A549 (cell line): ENCODE measurements at regions of chr17 and their contacts with region 1.

Region 1: DNA sequence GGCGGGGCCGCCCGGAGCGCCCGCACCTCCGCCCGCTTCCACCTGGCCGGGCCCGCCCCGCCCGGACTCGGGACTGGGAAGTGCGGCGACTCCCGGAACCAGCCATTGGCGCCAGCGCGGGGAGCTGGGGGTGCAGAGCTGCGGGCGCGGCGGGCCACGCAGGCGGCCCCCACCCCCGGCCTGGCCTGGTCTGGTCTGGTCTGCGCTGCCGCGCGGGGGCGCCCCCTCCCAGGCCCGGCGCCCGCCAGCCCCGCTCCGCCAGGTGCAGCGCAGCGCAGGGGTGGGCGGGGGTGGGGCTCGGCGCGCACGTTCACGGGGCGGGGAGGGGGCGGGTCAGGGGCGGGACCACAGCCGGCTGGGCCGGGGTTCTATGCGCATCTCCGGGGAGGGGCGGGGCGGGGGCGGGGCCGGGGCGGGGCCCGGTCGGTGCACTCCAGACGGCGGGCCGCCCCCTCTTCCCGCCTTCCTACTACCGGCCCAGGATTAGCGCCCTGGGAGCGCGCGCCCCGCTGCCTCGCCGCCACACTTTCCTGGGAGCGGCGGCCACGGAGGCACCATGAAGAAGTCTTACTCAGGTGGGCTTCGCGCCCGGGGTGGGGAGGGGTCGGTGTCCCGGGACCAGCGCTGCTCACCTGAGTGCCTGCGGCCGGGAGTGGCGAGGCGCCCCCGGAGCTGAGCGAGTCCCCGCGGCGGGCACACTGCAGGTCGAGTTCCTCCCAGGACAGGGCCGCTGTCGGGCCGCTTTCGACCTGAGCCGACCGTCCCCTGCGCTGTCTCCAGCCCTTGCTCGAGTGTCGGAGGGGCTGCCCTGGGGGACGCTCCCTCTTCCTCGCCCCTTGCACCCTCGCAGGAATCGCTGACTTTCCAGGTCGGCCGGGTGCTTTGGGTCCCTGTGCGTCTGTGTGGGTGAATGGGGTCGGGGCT is 140.5 kb downstream of the SEC14L1 start:
- DNase-seq: peak; percentile 86 to 93
- ATAC-seq: peak; percentile 58 to 60
- H3K4me3 ChIP-seq: peak overlapping the region; percentile 81
- H3K27ac ChIP-seq: peak overlapping the region; percentile 92 to 94
- H3K4me1 ChIP-seq: peaks cover 44% of the 10 kb centered on the region
- CTCF ChIP-seq: peak; percentile 93
- EP300 ChIP-seq: no peak
- POLR2A ChIP-seq: peak; percentile 70
- RAD21 ChIP-seq: peak; percentile 52 to 92; a peak in 4 of 5 replicates

Region 2: GRCh38 chr17:77061669-77062068 is 219.6 kb before region 1 on chr17:
- CTCF ChIA-PET with region 1: no interaction called
- POLR2A ChIA-PET with region 1: no interaction called
- DNase-seq: no peak
- ATAC-seq: no peak
- H3K4me3 ChIP-seq: no peak overlapping the region
- H3K27ac ChIP-seq: no peak overlapping the region
- H3K4me1 ChIP-seq: peaks cover 4% of the 10 kb centered on the region; the same call in 1 of the 3 replicates
- CTCF ChIP-seq: no peak
- EP300 ChIP-seq: no peak
- POLR2A ChIP-seq: no peak
- RAD21 ChIP-seq: no peak

Region 3: DNA sequence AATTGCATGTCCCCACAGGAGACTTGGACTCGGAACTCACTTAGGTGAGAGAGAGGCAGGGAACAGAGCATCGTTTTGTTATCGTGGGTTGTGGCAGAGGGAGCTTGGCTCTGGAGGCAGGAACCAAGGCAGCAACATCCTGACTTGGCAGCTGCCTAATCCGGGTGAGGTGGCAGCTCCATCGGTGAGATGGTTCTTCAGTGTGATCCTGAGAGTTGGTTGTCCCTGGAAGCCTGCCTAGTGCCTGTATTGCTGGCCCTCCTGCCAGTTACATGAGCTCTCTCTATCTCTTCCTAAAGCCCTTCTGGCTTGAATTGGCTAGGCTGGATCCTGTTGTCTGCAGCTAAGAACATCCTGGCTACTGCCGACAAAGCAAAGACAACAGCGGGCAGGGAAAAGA is 160.4 kb before region 1 on chr17:
- CTCF ChIA-PET with region 1: no interaction called
- POLR2A ChIA-PET with region 1: no interaction called
- DNase-seq: no peak
- ATAC-seq: no peak
- H3K4me3 ChIP-seq: no peak overlapping the region
- H3K27ac ChIP-seq: peak overlapping the region; percentile 70 to 81
- H3K4me1 ChIP-seq: peaks cover 50% of the 10 kb centered on the region
- CTCF ChIP-seq: no peak
- EP300 ChIP-seq: no peak
- POLR2A ChIP-seq: no peak
- RAD21 ChIP-seq: no peak

Region 4: DNA sequence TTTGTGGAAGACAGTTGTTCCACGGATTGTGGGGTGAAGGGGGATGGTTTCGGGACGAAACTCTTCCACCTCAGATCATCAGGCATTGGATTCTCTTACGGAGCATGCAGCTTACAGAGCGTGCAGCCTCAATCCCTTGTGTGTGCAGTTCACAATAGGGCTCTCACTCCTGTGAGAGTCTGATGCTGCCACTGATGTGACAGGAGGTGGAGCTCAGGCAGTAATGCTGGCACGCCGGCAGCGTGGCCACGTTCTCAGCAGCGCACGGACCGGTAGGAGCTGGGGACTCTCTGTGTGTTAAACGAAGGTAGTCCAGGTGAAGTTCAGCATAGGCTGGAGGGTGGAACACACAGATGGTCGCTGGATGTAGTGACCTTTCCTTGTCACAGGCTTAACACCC is 102.7 kb before region 1 on chr17:
- CTCF ChIA-PET with region 1: no interaction called
- POLR2A ChIA-PET with region 1: no interaction called
- DNase-seq: no peak
- ATAC-seq: no peak
- H3K4me3 ChIP-seq: no peak overlapping the region
- H3K27ac ChIP-seq: no peak overlapping the region
- H3K4me1 ChIP-seq: no peaks in the 10 kb centered on the region
- CTCF ChIP-seq: no peak
- EP300 ChIP-seq: no peak
- POLR2A ChIP-seq: no peak
- RAD21 ChIP-seq: no peak

Region 5: GRCh38 chr17:77227461-77228237 is 53.6 kb before region 1 on chr17:
- CTCF ChIA-PET with region 1: no interaction called
- POLR2A ChIA-PET with region 1: no interaction called
- DNase-seq: no peak
- ATAC-seq: peak; percentile 54 to 58
- H3K4me3 ChIP-seq: no peak overlapping the region
- H3K27ac ChIP-seq: peak overlapping the region in 1 of 2 experiments; percentile 19; a peak in 2 of 6 replicates
- H3K4me1 ChIP-seq: no peaks in the 10 kb centered on the region
- CTCF ChIP-seq: no peak
- EP300 ChIP-seq: no peak
- POLR2A ChIP-seq: no peak
- RAD21 ChIP-seq: no peak

Region 6: DNA sequence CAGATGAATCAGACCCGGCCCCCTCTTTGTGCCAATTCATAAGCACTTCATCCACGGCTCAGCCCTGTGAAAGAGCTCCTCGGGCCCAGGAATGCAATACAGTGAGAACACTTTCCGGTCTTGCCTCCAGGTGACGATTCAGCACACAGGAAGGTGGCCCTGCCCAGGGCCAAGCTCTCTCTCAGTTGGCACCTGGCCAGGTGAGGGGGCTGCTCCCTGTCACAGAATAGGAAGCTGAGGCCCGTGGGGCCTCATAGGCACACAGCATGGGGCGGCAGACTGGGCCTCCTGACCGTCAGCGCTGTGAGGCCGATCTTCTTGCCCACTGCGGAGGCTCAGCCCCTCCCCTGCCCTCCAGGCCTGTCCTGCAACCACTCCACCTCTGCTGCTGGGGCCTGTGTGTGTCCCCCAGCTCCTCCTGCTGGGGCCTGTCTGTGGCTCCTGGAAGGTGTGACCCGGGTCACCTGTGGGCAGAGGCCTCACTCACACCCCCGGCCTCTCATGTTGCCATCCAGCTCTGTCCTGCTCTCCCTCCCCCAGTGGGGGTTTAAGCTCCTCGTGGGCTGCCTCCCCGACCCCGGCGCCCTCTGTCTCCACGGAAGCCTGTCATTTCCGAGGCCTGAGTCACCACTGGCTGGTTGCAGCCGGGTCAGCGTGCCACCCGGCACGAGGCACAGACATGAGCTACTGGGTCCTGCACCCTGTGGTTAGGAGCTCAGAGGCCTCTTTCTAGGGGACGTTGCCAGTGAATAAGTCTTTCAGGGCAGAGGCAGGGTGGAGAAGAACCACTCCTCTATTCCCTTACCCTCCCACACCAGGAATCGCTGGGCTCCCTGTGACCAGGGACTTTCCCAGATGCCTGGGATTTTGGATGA is 26.1 kb before region 1 on chr17:
- CTCF ChIA-PET with region 1: interaction called, 16 read pairs
- POLR2A ChIA-PET with region 1: interaction called, 16 read pairs
- DNase-seq: peak; percentile 87 to 93
- ATAC-seq: peak; percentile 82 to 86
- H3K4me3 ChIP-seq: no peak overlapping the region
- H3K27ac ChIP-seq: peak overlapping the region; percentile 80 to 88
- H3K4me1 ChIP-seq: peaks cover 36% of the 10 kb centered on the region
- CTCF ChIP-seq: no peak; the same call in 2 of the 3 replicates
- EP300 ChIP-seq: peak in 1 of 2 experiments; percentile 52; a peak in 1 of 5 replicates
- POLR2A ChIP-seq: no peak
- RAD21 ChIP-seq: peak in 1 of 2 experiments; percentile 34; a peak in 4 of 5 replicates

Region 7: DNA sequence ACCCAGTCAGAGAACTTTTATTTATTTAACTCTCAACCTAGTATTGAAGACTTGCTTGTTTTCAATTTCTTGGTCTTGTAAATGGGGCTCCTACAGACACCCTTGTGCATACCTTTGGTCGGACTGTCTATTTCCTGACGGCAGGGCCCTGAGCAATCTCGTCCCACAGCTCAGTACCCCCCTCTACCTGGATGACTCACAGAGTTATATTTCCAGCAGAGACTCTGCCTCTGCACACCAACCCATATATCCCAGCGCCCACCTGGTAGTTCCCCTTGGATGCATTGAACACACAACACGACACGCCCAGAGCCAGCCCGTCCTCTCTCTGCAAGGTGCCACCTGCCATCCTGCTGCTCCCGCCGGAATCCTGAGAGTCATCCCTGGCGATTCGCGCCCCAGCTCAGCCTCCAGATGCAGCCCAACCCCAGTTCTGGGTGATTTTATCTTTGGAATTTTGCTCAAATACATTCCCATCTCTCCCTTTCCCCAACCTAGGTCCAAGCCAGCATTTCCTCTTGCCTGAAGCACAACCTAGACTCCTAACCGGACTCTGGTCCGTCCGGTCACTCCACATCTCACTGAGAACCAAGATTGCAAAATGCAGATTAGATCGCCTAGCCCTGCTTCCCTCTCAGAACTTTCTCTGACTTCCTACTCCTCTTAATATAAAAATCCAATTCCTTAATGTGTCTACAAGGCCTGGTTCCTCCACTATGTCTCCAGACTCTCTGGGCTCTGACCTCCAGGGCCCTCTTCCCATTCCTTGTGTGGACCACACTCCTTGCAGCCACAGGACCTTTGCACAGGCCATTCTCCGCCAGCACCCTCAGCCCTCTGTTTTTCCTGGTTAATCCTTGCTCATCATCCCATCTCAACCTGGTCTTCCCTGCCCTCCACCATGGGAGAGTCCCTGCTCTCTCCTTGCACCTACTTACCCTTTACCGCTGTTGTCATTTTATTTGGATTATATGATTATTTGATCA is 11.3 kb before region 1 on chr17:
- CTCF ChIA-PET with region 1: interaction called, 11 read pairs
- POLR2A ChIA-PET with region 1: no interaction called
- DNase-seq: no peak
- ATAC-seq: no peak; a peak in 1 of 6 replicates
- H3K4me3 ChIP-seq: no peak overlapping the region
- H3K27ac ChIP-seq: no peak overlapping the region
- H3K4me1 ChIP-seq: no peaks in the 10 kb centered on the region
- CTCF ChIP-seq: no peak
- EP300 ChIP-seq: no peak
- POLR2A ChIP-seq: no peak
- RAD21 ChIP-seq: no peak

Region 8: DNA sequence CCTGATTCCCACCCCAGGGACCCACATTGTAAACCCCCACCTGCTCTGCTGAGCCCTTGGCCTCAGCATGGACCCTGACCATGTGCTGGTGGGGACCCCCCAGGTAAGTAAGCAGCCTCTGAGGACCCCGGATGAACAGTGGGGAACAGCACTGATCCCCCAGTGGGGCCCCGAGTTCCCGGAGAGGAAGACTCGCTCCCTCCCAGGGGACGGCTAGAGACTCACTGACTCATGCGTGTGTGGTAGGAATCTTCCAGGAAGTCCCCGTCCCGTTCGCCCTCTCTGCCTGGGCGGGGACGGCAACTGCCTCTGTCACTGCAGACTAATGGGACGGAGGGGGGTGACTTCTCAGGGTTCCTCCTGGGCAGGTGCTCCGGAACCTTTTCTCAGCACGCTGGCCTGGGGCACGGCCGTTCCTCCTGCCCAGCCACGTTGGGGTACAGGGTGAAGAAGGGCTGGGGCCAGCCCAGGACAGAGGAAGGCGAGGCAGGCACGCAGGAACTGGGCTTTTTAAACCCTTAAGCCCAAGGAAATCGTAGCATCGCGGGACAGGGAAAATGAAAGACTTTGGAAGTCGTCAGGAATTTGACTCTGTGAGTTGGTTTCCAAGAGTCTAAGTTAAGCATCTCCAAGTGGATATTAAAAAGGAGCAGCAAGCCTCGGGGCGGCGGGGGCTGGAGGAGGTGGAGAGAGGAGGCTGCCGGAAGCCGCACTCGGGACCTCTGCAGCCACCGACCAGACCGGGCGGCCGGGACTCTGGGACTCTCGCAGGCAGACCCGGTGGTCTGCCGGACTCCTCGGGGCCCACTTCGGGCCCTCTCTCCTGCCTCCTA is 38.2 kb after region 1 on chr17:
- CTCF ChIA-PET with region 1: interaction called, 33 read pairs
- POLR2A ChIA-PET with region 1: interaction called, 98 read pairs
- DNase-seq: peak; percentile 93 to 95
- ATAC-seq: peak; percentile 69 to 76
- H3K4me3 ChIP-seq: peak overlapping the region; percentile 64
- H3K27ac ChIP-seq: peak overlapping the region; percentile 93 to 98
- H3K4me1 ChIP-seq: peaks cover 81% of the 10 kb centered on the region
- CTCF ChIP-seq: no peak
- EP300 ChIP-seq: 0 out of 5 replicates have a peak, but pooled peaks of 1 of the 2 experiments have one; percentile 30
- POLR2A ChIP-seq: peak; percentile 46; the same call in 1 of the 2 replicates
- RAD21 ChIP-seq: no peak